A673 (cell line): ENCODE measurements at regions of chr13 and their contacts with region 1.

Region 1: GRCh38 chr13:109778102-109778542 is 8.3 kb downstream of the IRS2 start:
- DNase-seq: peak; percentile 60
- H3K4me3 ChIP-seq: peak overlapping the region; percentile 82
- H3K27ac ChIP-seq: peak overlapping the region; percentile 97
- H3K4me1 ChIP-seq: peaks cover 35% of the 10 kb centered on the region
- H3K27me3 ChIP-seq: no peaks in the 10 kb centered on the region
- CTCF ChIP-seq: no peak

Region 2: DNA sequence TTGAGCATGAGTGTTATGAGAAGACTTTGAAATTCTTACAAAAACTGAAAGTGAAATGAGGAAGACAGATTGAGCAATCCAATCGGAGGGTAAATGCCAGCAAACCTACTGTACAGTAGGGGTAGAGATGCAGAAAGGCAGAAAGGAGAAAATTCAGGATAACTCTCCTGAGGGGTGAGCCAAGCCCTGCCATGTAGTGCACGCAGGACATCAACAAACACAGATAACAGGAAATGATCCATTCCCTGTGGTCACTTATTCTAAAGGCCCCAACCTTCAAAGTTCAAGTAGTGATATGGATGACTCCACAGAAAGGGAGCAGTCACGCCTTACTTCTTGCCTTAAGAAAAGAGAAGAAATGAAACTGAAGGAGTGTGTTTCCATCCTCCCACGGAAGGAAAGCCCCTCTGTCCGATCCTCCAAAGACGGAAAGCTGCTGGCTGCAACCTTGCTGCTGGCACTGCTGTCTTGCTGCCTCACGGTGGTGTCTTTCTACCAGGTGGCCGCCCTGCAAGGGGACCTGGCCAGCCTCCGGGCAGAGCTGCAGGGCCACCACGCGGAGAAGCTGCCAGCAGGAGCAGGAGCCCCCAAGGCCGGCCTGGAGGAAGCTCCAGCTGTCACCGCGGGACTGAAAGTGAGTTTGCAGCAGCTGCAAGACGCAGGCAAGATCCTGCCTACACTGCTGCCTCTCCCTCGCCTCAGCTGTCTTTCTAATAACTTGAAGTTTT is 1508.4 kb before region 1 on chr13 and contains the start of gene TNFSF13B:
- CTCF ChIA-PET with region 1: no interaction called
- POLR2A ChIA-PET with region 1: no interaction called
- intact Hi-C with region 1: loop called (anchors 5 kb)
- DNase-seq: peak; percentile 62
- H3K4me3 ChIP-seq: peak within 1 kb of the TSS; percentile 41
- H3K27ac ChIP-seq: peak within 1 kb of the TSS; percentile 84
- H3K4me1 ChIP-seq: peaks cover 59% of the 10 kb centered on the region
- H3K27me3 ChIP-seq: no peaks in the 10 kb centered on the region
- CTCF ChIP-seq: peak; percentile 34; the same call in 1 of the 2 replicates
- total RNA-seq, gene TNFSF13B: 9.2 and 11.2 TPM in 2 replicates

Region 3: DNA sequence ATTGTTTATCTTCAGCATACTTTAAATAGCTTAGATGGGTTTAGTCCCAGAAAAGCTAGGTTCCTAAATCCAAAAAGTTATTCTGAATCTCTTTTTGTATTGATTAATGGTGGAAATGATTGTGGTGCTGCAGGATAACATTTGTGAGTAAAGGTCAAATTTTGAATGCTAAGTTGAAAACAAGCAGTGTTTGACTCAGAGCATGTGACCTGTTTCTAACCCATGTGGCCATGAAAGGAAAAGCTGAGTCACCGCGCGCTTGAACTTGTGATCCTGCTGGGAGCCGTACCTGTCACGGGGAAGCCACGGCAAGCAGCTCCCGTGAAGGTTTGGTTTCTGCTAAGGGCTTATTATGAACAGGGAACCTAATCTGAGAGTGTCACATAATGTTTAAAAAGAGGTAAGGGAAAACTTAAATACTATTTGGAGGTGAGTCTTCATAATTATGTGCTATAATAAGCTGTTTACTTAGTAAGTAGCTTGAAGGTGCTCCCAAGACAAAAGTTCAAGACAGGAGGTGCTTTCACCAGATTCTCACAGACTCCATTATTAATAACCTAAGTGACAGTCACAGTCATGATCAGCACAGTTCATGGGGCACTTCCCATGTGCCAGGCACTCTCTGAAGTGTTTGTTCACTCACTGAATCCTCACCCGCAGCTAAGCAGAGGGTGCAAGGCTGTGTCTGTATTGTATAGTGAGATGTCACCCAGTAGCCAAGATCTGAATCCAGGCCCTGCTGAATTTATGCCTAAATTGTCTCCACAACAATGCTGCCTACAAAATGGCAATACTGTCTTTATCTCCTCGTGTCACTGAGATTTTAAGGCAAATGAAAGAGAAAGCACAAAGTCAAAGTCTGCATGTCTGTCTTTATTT is 862.2 kb before region 1 on chr13:
- CTCF ChIA-PET with region 1: no interaction called
- POLR2A ChIA-PET with region 1: no interaction called
- intact Hi-C with region 1: loop called (anchors 2 kb)
- DNase-seq: peak; percentile 62
- H3K4me3 ChIP-seq: peak overlapping the region; percentile 4
- H3K27ac ChIP-seq: peak overlapping the region; percentile 61
- H3K4me1 ChIP-seq: peaks cover 36% of the 10 kb centered on the region
- H3K27me3 ChIP-seq: no peaks in the 10 kb centered on the region
- CTCF ChIP-seq: no peak

Region 4: GRCh38 chr13:109610517-109610916 is 167.6 kb before region 1 on chr13:
- CTCF ChIA-PET with region 1: no interaction called
- POLR2A ChIA-PET with region 1: no interaction called
- intact Hi-C with region 1: loop called (anchors 5 kb)
- DNase-seq: peak; percentile 51
- H3K4me3 ChIP-seq: no peak overlapping the region
- H3K27ac ChIP-seq: no peak overlapping the region
- H3K4me1 ChIP-seq: peaks cover 2% of the 10 kb centered on the region
- H3K27me3 ChIP-seq: no peaks in the 10 kb centered on the region
- CTCF ChIP-seq: peak; percentile 61

Region 5: GRCh38 chr13:109667056-109667455 is 111.1 kb before region 1 on chr13:
- CTCF ChIA-PET with region 1: interaction called, 4 read pairs
- POLR2A ChIA-PET with region 1: interaction called, 10 read pairs
- intact Hi-C with region 1: loop called (anchors 5 kb)
- DNase-seq: peak; percentile 85
- H3K4me3 ChIP-seq: peak overlapping the region; percentile 22
- H3K27ac ChIP-seq: peak overlapping the region; percentile 97
- H3K4me1 ChIP-seq: peaks cover 53% of the 10 kb centered on the region
- H3K27me3 ChIP-seq: no peaks in the 10 kb centered on the region
- CTCF ChIP-seq: no peak

Region 6: DNA sequence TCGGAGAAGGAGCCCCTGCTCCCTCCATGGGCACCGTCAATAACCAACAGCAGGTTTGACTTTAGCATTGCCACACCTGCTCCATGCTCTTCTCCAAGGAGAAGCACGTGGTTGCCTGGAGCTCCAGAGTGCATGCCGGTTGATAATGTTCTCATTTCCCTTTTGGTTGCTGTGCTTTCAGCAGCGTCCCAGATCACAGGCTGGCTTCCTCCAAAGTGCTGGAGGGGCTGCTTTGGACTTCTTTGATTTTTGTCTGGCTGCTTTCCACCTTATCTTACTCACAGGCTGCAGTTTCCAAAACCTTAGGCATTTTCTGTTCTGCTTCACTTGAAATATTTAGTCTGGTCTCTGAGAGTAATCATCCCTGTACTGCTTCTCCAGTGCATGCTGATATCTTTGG is 132.1 kb after region 1 on chr13:
- CTCF ChIA-PET with region 1: no interaction called
- POLR2A ChIA-PET with region 1: no interaction called
- intact Hi-C with region 1: no loop called
- DNase-seq: no peak
- H3K4me3 ChIP-seq: no peak overlapping the region
- H3K27ac ChIP-seq: no peak overlapping the region
- H3K4me1 ChIP-seq: no peaks in the 10 kb centered on the region
- H3K27me3 ChIP-seq: no peaks in the 10 kb centered on the region
- CTCF ChIP-seq: no peak